ENCODE measurements at regions of chr6 and their contacts with region 1.

Region 1: GRCh38 chr6:25889877-25890853 is 16.1 kb upstream of the SLC17A3 start:
- DNase-seq: peak; percentile 19 to 61 (median 40)
- H3K4me3 ChIP-seq: no peak overlapping the region
- H3K27ac ChIP-seq: no peak overlapping the region
- H3K4me1 ChIP-seq: no peaks in the 10 kb centered on the region
- H3K27me3 ChIP-seq: no peaks in the 10 kb centered on the region
- CTCF ChIP-seq: peak; percentile 30 to 72 (median 64)
- POLR2A ChIP-seq: no peak

Region 2: GRCh38 chr6:25726122-25726911 is 163.8 kb before region 1 on chr6:
- intact Hi-C with region 1: loop called in 1 of 2 experiments (anchors 10 kb)
- DNase-seq: no peak
- H3K4me3 ChIP-seq: no peak overlapping the region
- H3K27ac ChIP-seq: no peak overlapping the region
- H3K4me1 ChIP-seq: no peaks in the 10 kb centered on the region
- H3K27me3 ChIP-seq: peaks cover 4% of the 10 kb centered on the region
- CTCF ChIP-seq: no peak
- POLR2A ChIP-seq: no peak

Region 3: GRCh38 chr6:25788305-25788922 is 101.8 kb before region 1 on chr6:
- intact Hi-C with region 1: loop called in 1 of 2 experiments (anchors 5 kb)
- DNase-seq: peak; percentile 39 to 79 (median 66)
- H3K4me3 ChIP-seq: no peak overlapping the region
- H3K27ac ChIP-seq: no peak overlapping the region
- H3K4me1 ChIP-seq: no peaks in the 10 kb centered on the region
- H3K27me3 ChIP-seq: no peaks in the 10 kb centered on the region
- CTCF ChIP-seq: peak; percentile 17 to 68 (median 54)
- POLR2A ChIP-seq: no peak